Natural killer cell (primary cell): ENCODE measurements at regions of chr16 and their contacts with region 1.

Region 1: GRCh38 chr16:30844671-30845449 is 49.0 kb downstream of the BCL7C start:
- DNase-seq: peak; percentile 51 to 94
- ATAC-seq: peak; percentile 87 to 98 (median 98)
- H3K4me3 ChIP-seq: no peak overlapping the region
- H3K4me3 Mint-ChIP-seq: peak overlapping the region; percentile 4
- H3K27ac ChIP-seq: no peak overlapping the region
- H3K27ac Mint-ChIP-seq: peak overlapping the region in 1 of 2 donors; percentile 53
- H3K4me1 ChIP-seq: peaks cover 7% of the 10 kb centered on the region
- H3K4me1 Mint-ChIP-seq: peaks cover 9 to 10% of the 10 kb centered on the region in 2 donors
- H3K27me3 ChIP-seq: no peaks in the 10 kb centered on the region
- H3K27me3 Mint-ChIP-seq: no peaks in the 10 kb centered on the region
- CTCF ChIP-seq: peak; percentile 86

Region 2: DNA sequence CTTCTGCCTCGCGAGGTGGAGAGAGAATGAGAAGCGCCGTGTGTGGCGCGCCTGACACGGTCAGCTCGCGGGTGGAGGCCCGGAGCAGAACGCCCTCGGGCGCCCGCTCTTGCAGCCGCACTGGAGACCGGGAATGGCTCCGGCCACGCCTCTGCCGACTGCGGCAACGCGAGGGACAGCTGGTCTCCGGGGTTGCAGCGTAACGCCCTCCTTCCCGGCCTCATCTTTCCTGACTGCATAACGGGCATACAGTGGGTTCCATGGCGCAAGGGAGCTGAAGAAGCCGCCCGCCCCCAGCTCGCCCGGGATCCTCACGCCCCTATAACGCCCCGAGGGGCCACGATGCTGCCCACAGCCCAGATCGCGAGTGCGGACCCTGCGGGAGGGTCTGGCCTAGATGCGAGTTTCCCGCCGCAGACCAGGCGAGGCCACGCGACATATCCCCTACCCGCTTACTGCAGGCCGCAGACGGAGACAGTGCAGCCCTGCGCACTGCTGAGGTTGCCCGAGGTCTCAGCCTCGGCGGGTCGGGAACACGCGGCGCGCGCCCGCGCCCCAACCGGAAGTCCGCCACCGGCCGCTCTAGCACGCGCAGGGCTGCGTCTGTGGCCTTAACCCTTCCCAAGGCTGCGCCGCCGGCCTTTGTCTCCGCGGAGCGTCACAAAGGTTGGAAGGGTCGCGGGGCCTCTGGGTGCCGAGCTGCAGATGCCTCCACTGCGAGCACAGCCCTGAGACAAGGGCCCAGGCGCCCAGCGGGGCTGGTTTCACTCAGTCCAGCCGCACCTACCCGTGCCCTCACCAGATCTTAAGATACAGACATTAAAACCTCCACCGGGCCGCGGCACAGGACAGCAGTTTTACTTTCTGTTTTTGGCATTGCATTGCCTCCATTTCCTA is 30.2 kb after region 1 on chr16:
- intact Hi-C with region 1: loop called (anchors 5 kb)
- DNase-seq: peak; percentile 89 to 94
- ATAC-seq: peak; percentile 69 to 94 (median 86)
- H3K4me3 ChIP-seq: peak overlapping the region; percentile 71
- H3K4me3 Mint-ChIP-seq: peak overlapping the region; percentile 97
- H3K27ac ChIP-seq: peak overlapping the region; percentile 83
- H3K27ac Mint-ChIP-seq: peak overlapping the region; percentile 92 to 99
- H3K4me1 ChIP-seq: peaks cover 43% of the 10 kb centered on the region
- H3K4me1 Mint-ChIP-seq: peaks cover 39 to 54% of the 10 kb centered on the region in 2 donors
- H3K27me3 ChIP-seq: no peaks in the 10 kb centered on the region
- H3K27me3 Mint-ChIP-seq: no peaks in the 10 kb centered on the region
- CTCF ChIP-seq: no peak

Region 3: GRCh38 chr16:30902029-30902972 is 57.4 kb after region 1 on chr16:
- intact Hi-C with region 1: loop called (anchors 1 kb)
- DNase-seq: peak; percentile 68 to 82
- ATAC-seq: peak; percentile 86 to 93 (median 90)
- H3K4me3 ChIP-seq: peak overlapping the region; percentile 51
- H3K4me3 Mint-ChIP-seq: peak overlapping the region; percentile 99
- H3K27ac ChIP-seq: peak overlapping the region; percentile 85
- H3K27ac Mint-ChIP-seq: peak overlapping the region; percentile 96 to 99
- H3K4me1 ChIP-seq: peaks cover 43% of the 10 kb centered on the region
- H3K4me1 Mint-ChIP-seq: peaks cover 24 to 27% of the 10 kb centered on the region in 2 donors
- H3K27me3 ChIP-seq: no peaks in the 10 kb centered on the region
- H3K27me3 Mint-ChIP-seq: no peaks in the 10 kb centered on the region
- CTCF ChIP-seq: no peak

Region 4: GRCh38 chr16:30941600-30942425 is 97.0 kb after region 1 on chr16:
- intact Hi-C with region 1: loop called (anchors 1 kb)
- DNase-seq: peak; percentile 68 to 86
- ATAC-seq: peak; percentile 99
- H3K4me3 ChIP-seq: peak overlapping the region; percentile 21
- H3K4me3 Mint-ChIP-seq: peak overlapping the region; percentile 81
- H3K27ac ChIP-seq: peak overlapping the region; percentile 55
- H3K27ac Mint-ChIP-seq: peak overlapping the region; percentile 68 to 78
- H3K4me1 ChIP-seq: peaks cover 16% of the 10 kb centered on the region
- H3K4me1 Mint-ChIP-seq: peaks cover 22 to 33% of the 10 kb centered on the region in 2 donors
- H3K27me3 ChIP-seq: no peaks in the 10 kb centered on the region
- H3K27me3 Mint-ChIP-seq: no peaks in the 10 kb centered on the region
- CTCF ChIP-seq: peak; percentile 81

Region 5: GRCh38 chr16:31868691-31869167 is 1023.9 kb after region 1 on chr16:
- intact Hi-C with region 1: loop called (anchors 10 kb)
- DNase-seq: peak; percentile 75 to 89
- ATAC-seq: peak; percentile 40 to 49 (median 45)
- H3K4me3 ChIP-seq: no peak overlapping the region
- H3K4me3 Mint-ChIP-seq: peak overlapping the region; percentile 25
- H3K27ac ChIP-seq: peak overlapping the region; percentile 64
- H3K27ac Mint-ChIP-seq: peak overlapping the region; percentile 57 to 74
- H3K4me1 ChIP-seq: peaks cover 23% of the 10 kb centered on the region
- H3K4me1 Mint-ChIP-seq: peaks cover 19 to 23% of the 10 kb centered on the region in 2 donors
- H3K27me3 ChIP-seq: no peaks in the 10 kb centered on the region
- H3K27me3 Mint-ChIP-seq: peaks cover 0 to 2% of the 10 kb centered on the region in 2 donors
- CTCF ChIP-seq: peak; percentile 93